Posterior cingulate gyrus (tissue), 11 donors: ENCODE measurements at regions of chr3 and their contacts with region 1.

Region 1: DNA sequence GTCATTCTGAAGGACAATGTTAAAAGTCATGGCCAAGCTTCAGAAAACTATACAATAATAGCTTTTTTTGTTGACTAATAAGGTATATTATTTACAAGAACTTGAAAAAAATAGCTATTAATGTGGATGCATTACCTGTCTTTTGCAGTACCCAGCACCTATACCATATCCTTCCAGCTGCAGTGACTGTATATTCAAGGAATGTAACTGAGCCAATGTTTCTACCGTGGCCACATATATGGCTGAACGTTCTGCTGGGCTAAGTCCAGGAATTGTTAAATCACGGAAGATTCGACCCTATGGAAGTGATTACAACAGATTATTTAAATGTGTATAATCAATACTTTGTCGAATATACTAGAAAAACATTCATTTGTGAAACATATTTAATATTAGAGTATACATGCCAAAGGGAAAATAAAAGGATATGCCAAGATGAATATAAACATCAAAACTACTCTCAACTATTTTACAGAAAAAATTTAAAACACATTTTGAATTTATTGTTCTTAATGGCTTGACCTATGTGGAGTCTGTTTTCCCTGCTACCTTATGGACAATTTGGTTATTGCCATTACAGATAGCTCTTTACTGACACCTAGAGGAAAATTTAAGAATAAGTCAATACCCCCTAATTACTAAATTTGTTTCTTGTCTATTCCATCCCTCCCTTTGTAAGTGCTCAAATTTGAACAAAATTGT is 17.6 kb downstream of the ACAD11 start:
- DNase-seq: no peak

Region 2: DNA sequence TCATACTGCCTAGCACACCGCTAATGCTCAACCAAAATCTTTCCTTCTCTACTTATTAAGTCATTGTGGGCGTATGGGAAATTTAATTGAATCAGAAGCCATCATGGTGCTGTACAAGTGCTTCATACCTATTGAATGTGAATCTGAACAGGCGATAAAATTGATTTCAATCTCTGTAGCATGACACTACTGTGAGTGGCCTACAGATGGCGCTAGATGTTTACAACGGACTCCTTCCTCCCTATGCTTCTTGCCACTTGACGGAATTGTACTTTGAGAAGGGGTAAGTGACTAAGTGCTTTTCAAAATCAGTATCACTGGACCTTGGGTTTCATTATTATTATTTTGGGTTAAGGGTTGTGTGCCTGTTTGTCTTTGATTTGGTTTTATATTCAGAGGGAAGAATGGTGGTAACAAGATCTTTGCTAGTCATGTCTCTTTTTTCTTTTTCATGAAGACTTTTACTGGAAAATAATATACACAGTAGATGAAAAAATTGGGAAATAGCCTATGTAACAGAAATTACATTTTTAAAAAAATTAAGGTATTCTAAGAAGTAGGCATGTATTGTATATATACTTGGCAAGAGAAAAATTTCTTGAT is 289.3 kb before region 1 on chr3:
- intact Hi-C with region 1: loop called (anchors 5 kb)
- DNase-seq: peak in 4 of 10 donors; percentile 41 to 65 (median 58)

Region 3: DNA sequence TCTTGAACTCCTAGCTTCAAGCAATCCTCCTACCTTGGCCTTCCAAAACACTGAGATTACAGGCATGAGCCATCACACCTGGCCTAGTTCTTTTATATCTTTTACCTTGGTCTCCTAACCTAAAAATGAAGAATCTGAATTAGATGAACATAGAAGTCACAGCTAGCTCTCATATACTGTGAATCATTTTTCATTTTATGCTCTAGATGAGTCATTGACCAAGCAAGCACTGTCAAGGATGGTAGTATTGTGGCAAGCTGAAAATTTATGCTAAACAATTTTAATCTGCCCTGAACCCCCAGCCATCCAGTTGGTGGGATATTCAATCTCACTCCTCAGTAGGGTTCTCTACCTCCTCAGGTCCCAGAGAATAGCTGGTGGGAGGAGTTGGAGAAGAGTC is 273.0 kb before region 1 on chr3:
- intact Hi-C with region 1: no loop called
- DNase-seq: no peak

Region 4: GRCh38 chr3:132522353-132522752 is 119.6 kb before region 1 on chr3:
- intact Hi-C with region 1: no loop called
- DNase-seq: no peak

Region 5: DNA sequence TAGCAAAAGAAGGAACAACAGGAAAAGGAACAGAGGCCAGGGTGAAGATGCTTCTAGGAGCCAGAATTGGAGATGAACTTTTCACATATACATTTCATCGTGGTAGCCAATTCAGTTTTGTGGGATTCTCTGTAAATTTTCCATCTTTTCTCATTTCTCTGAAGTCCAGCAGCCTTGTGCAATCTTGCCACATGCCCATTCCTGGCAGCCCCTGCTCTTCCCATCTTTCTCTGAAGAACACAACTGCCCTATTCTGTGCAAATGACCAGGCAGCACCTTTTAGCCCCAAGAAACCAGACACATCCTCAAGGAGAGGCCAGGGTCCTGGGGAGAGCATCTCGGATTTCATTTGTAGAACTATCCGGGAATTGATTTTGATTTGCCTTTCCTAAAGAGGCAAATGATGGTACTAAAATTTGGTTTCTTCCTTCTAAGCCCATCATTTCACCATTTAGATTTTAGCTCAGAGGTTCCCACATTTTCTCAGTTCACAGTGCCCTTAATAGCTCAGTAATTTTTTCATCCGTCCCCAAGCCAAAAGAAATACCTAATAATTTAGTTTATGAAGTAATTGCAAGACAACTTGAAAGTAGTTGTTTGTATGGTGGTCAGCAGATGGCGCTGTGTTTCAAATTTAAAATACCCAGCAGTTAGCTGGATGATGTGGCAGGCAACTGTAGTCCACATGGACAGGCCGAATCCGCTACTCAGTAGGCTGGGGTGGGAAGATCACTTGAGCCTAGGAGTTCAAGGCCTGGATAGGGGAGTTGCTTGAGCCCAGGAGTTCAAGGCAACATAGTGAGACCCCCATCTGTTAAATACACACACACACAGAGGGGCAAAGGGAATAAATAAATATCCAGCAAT is 106.2 kb before region 1 on chr3:
- intact Hi-C with region 1: loop called (anchors 1 kb)
- DNase-seq: peak in 6 of 10 donors; percentile 29 to 87 (median 56)